Esophagus squamous epithelium (tissue), 5 donors: ENCODE measurements at regions of chr5 and their contacts with region 1.

Region 1: DNA sequence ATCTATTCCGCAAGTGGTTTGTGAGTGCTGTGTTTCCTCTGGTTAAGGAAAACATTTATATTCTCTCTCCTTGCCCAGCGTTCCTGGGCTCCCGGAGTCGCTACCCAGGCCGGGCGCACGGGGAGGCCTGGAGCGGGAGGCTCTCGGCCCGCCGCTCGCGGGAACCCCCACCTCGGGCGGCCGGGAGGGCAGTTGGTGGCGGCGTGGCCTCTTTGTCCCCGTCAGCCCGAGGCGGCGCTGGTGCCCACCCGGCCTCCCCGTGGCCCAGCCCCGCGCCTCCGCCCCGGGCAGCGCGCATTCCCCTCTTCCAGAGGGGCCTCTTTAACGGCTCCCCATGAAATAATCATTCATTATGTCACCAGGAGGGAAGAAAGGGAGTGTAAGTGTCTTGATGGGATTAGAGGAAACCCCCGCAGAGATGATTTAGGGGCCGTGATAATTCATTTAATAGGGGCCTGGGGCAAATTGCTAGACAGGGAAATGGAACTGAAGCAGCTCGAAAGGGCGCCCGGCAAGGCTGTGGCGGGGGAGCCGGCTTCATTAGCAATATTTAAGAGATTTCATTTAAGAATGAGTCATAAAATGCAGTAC is 181.9 kb upstream of the TBCA start:
- DNase-seq: no peak
- H3K4me3 ChIP-seq: peak overlapping the region in 1 of 4 donors; percentile 36
- H3K27ac ChIP-seq: no peak overlapping the region
- H3K4me1 ChIP-seq: peaks cover 0 to 9% (median 0%) of the 10 kb centered on the region in 3 donors
- H3K27me3 ChIP-seq: peaks cover 0 to 58% (median 5%) of the 10 kb centered on the region in 4 donors
- CTCF ChIP-seq: no peak
- POLR2A ChIP-seq: no peak

Region 2: GRCh38 chr5:77844623-77845323 is 113.3 kb before region 1 on chr5:
- intact Hi-C with region 1: no loop called
- DNase-seq: no peak
- H3K4me3 ChIP-seq: peak overlapping the region; percentile 24 to 64 (median 40)
- H3K27ac ChIP-seq: peak overlapping the region in 1 of 4 donors; percentile 6
- H3K4me1 ChIP-seq: peaks cover 0 to 16% (median 3%) of the 10 kb centered on the region in 3 donors
- H3K27me3 ChIP-seq: peaks cover 0 to 44% (median 0%) of the 10 kb centered on the region in 4 donors
- CTCF ChIP-seq: no peak
- POLR2A ChIP-seq: no peak

Region 3: GRCh38 chr5:77906806-77907205 is 51.2 kb before region 1 on chr5:
- intact Hi-C with region 1: loop called (anchors 10 kb)
- DNase-seq: no peak
- H3K4me3 ChIP-seq: no peak overlapping the region
- H3K27ac ChIP-seq: no peak overlapping the region
- H3K4me1 ChIP-seq: no peaks in the 10 kb centered on the region
- H3K27me3 ChIP-seq: peaks cover 0 to 6% (median 0%) of the 10 kb centered on the region in 4 donors
- CTCF ChIP-seq: no peak
- POLR2A ChIP-seq: no peak